Activated T-helper 1 cell treated with anti-CD3 and anti-CD28 coated beads, Interleukin-12 subunit alpha, Interleukin-12 subunit beta, Interleukin-2, Interleukin-4 antibody, amounts not matched to agents 30 ng/mL and 10 ng/mL and 1 ng/mL, durations not matched to agents 14 hours and 24 hours and 36 hours (primary cell): ENCODE measurements at regions of chr3 and their contacts with region 1.

Region 1: GRCh38 chr3:112676659-112677234 is 35.8 kb upstream of the CCDC80 start:
- DNase-seq: peak; percentile 89
- H3K4me3 Mint-ChIP-seq: peak overlapping the region; percentile 64
- H3K27ac Mint-ChIP-seq: peak overlapping the region; percentile 87
- H3K4me1 Mint-ChIP-seq: peaks cover 70% of the 10 kb centered on the region
- H3K27me3 Mint-ChIP-seq: no peaks in the 10 kb centered on the region

Region 2: GRCh38 chr3:111604119-111604518 is 1072.6 kb before region 1 on chr3:
- intact Hi-C with region 1: loop called (anchors 10 kb)
- DNase-seq: no peak
- H3K4me3 Mint-ChIP-seq: peak overlapping the region; percentile 53
- H3K27ac Mint-ChIP-seq: peak overlapping the region; percentile 99
- H3K4me1 Mint-ChIP-seq: peaks cover 84% of the 10 kb centered on the region
- H3K27me3 Mint-ChIP-seq: no peaks in the 10 kb centered on the region

Region 3: GRCh38 chr3:112539825-112540650 is 136.7 kb before region 1 on chr3:
- intact Hi-C with region 1: no loop called
- DNase-seq: no peak
- H3K4me3 Mint-ChIP-seq: no peak overlapping the region
- H3K27ac Mint-ChIP-seq: no peak overlapping the region
- H3K4me1 Mint-ChIP-seq: peaks cover 23% of the 10 kb centered on the region
- H3K27me3 Mint-ChIP-seq: no peaks in the 10 kb centered on the region

Region 4: GRCh38 chr3:112561731-112562688 is 114.7 kb before region 1 on chr3 and contains the starts of genes ATG3 and SLC35A5:
- intact Hi-C with region 1: loop called (anchors 1 kb)
- DNase-seq: peak; percentile 98
- H3K4me3 Mint-ChIP-seq: peak within 1 kb of the TSS; percentile 93
- H3K27ac Mint-ChIP-seq: peak within 1 kb of the TSS; percentile 99
- H3K4me1 Mint-ChIP-seq: peaks cover 31% of the 10 kb centered on the region
- H3K27me3 Mint-ChIP-seq: no peaks in the 10 kb centered on the region
- total RNA-seq, gene ATG3: 66.2 and 69.8 TPM in 2 replicates
- total RNA-seq, gene SLC35A5: 14.9 and 15.5 TPM in 2 replicates

Region 5: GRCh38 chr3:112958811-112959560 is 282.2 kb after region 1 on chr3:
- intact Hi-C with region 1: loop called (anchors 1 kb)
- DNase-seq: no peak
- H3K4me3 Mint-ChIP-seq: peak overlapping the region; percentile 64
- H3K27ac Mint-ChIP-seq: peak overlapping the region; percentile 67
- H3K4me1 Mint-ChIP-seq: peaks cover 32% of the 10 kb centered on the region
- H3K27me3 Mint-ChIP-seq: no peaks in the 10 kb centered on the region

Region 6: DNA sequence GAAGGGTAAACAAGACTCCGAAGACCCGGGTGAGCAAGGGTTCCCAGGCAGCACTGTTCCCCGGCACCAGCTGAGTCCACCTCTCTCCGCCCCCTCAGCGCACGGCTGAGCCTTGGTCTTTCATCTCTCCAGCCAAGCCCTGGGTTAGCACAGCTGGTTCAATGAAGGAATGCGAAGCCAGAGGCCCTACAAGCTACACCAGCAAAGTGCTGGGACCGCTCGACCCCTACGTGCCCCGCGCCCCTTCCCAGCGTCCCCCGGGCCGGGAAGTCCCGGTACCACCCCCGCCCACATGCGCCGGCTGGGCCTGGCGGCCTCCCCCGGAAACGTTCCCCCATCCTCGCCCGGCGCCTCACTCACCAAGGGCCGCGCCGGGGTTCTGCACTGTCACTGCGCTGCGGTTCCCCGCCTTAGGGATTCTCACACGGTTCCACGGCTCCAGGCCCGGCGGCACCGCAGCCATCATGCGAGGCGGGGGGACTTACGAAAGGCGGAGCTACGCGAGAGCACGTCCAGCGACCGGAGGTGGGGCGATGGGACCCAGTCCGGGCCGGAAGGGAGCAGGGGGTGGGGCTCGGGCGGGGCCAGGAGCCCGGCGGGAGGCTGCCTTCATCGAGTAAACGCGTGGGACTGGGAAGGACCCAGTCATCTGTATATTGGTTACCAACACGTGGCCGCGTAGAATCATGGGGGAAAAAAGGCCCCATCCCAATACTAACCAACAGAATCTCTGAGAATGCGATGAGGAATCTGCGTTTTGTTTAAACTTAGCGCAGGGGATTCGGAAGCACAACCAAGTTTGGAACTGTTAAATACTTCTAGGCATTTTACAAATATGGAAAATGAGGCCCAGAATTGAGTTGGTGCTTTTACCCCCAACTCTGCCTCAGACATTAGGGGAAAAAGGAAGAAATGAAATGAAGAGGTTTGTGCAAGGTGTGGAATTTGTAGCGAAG is 342.7 kb after region 1 on chr3:
- intact Hi-C with region 1: loop called (anchors 1 kb)
- DNase-seq: peak; percentile 77
- H3K4me3 Mint-ChIP-seq: peak overlapping the region; percentile 91
- H3K27ac Mint-ChIP-seq: peak overlapping the region; percentile 89
- H3K4me1 Mint-ChIP-seq: peaks cover 58% of the 10 kb centered on the region
- H3K27me3 Mint-ChIP-seq: no peaks in the 10 kb centered on the region

Region 7: GRCh38 chr3:113745273-113746068 is 1068.7 kb after region 1 on chr3:
- intact Hi-C with region 1: loop called (anchors 10 kb)
- DNase-seq: peak; percentile 70
- H3K4me3 Mint-ChIP-seq: peak overlapping the region; percentile 99
- H3K27ac Mint-ChIP-seq: peak overlapping the region; percentile 100
- H3K4me1 Mint-ChIP-seq: peaks cover 83% of the 10 kb centered on the region
- H3K27me3 Mint-ChIP-seq: peaks cover 4% of the 10 kb centered on the region